ENCODE measurements at regions of chr17 and their contacts with region 1.

Region 1: DNA sequence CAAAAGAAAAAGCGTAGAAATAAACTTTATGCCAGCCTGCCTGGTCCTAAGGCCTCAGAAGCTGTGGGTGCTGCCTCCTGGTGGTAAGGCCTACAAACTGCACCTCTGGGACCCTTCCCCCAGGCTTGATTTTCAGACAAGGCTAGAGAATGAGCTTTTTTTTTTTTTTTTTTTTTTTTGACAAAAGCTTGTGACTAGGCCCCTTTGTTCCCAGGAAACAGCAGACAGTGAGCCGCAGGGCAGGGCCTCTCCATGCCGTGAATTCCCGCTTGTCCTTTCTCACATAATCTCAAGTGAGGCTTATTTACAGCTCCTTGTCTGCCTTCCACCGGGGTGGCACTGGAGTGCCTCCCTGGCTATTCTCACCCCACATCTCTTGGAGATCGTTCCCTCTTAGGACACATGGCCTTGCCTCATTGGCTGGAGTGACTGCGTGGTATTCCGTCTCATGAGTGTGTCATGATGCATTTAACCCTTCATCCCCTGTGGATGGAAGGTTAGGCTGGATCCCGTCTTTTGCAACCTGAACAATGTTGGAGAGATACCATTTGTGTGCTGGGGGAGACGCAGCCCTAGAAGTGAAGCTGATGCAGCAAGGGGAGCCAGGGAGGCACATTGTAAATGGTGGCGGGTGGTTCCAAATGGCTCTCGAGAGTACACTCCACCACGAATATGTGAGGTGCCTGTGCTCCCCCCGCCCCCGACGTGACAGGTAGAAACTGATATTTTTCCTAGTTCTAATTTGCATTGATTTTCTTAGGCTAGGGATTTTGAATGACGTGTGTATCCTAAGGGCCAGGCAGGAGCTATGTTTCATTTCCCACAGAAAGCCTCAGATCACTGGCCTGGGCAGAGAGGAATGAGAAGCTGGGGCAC is 49.6 kb downstream of the USP22 start:
- DNase-seq: peak; percentile 89
- ATAC-seq: peak; percentile 61
- H3K4me3 ChIP-seq: no peak overlapping the region
- H3K27ac ChIP-seq: peak overlapping the region; percentile 38
- H3K4me1 ChIP-seq: peaks cover 5% of the 10 kb centered on the region; the same call in 1 of the 2 replicates
- H3K27me3 ChIP-seq: no peaks in the 10 kb centered on the region
- CTCF ChIP-seq: peak; percentile 93

Region 2: DNA sequence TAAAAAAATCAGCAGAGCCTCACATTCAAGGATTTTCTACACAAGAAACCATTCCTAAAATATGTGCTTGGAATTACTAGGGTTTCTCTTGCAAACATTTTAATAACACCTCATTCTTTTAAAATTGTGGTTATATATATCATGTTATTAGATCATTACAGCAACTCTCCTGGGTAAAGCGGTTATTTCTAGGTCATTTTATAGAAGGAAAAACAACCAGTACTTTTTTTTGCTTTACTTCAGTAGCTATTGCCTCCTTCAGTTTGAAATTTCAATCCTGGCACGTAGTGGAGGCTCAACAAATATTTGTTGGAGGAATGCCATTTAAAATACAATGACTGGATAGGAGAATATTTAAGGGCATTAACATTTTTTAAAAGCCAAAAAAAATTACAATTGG is 193.1 kb before region 1 on chr17:
- CTCF ChIA-PET with region 1: no interaction called
- POLR2A ChIA-PET with region 1: no interaction called
- intact Hi-C with region 1: loop called (anchors 5 kb)
- DNase-seq: no peak
- ATAC-seq: no peak
- H3K4me3 ChIP-seq: no peak overlapping the region
- H3K27ac ChIP-seq: no peak overlapping the region
- H3K4me1 ChIP-seq: peaks cover 9% of the 10 kb centered on the region; the same call in 1 of the 2 replicates
- H3K27me3 ChIP-seq: no peaks in the 10 kb centered on the region
- CTCF ChIP-seq: no peak

Region 3: GRCh38 chr17:20908373-20909273 is 84.6 kb before region 1 on chr17:
- CTCF ChIA-PET with region 1: interaction called, 10 read pairs
- POLR2A ChIA-PET with region 1: no interaction called
- intact Hi-C with region 1: no loop called
- DNase-seq: peak; percentile 89
- ATAC-seq: peak; percentile 99
- H3K4me3 ChIP-seq: peak overlapping the region; percentile 62
- H3K27ac ChIP-seq: peak overlapping the region; percentile 70
- H3K4me1 ChIP-seq: peaks cover 13% of the 10 kb centered on the region
- H3K27me3 ChIP-seq: no peaks in the 10 kb centered on the region
- CTCF ChIP-seq: peak; percentile 75

Region 4: GRCh38 chr17:20944014-20944865 is 49.0 kb before region 1 on chr17:
- CTCF ChIA-PET with region 1: interaction called, 9 read pairs
- POLR2A ChIA-PET with region 1: no interaction called
- intact Hi-C with region 1: loop called (anchors 5 kb)
- DNase-seq: peak; percentile 83
- ATAC-seq: peak; percentile 89
- H3K4me3 ChIP-seq: no peak overlapping the region
- H3K27ac ChIP-seq: no peak overlapping the region
- H3K4me1 ChIP-seq: no peaks in the 10 kb centered on the region
- H3K27me3 ChIP-seq: peaks cover 11% of the 10 kb centered on the region
- CTCF ChIP-seq: peak; percentile 84